Breast epithelium (tissue), 4 donors: ENCODE measurements at regions of chr2 and their contacts with region 1.

Region 1: DNA sequence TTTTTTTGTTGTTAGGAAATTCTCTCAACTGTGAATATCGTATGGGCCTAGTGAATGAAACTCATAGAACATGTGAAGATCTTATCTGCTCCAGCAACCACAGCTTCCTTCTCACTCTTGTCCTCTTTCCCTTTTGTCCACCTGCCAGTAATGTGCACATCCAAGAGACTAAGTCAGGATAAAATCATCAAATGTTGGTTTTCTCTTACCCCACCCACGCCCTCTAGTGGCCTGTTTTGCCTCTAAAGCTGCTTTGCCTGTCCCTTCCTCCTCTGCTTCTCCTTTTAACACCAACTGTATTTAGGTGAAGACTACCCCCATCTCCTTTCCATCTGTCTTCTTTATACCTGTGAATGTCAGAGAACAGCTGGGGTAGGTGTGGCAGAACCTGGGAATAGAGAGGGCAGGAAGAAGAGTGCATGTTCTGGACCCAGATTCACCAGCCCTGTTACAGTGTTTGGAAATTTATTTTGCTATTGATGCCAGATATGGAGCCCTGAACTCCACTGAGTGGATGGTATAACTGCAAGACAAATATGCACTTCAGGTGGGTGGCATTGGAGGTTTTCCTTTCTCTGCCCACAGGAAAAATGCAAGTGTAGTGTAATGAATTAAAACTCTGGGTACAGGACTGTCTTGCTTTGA is 8.4 kb upstream of the MGAT5 start:
- DNase-seq: peak; percentile 69 to 73
- H3K4me3 ChIP-seq: no peak overlapping the region
- H3K27ac ChIP-seq: no peak overlapping the region
- H3K4me1 ChIP-seq: no peaks in the 10 kb centered on the region
- H3K27me3 ChIP-seq: no peaks in the 10 kb centered on the region
- CTCF ChIP-seq: peak; percentile 24 to 75 (median 71)
- POLR2A ChIP-seq: no peak

Region 2: GRCh38 chr2:133855526-133855925 is 389.9 kb before region 1 on chr2:
- intact Hi-C with region 1: no loop called
- DNase-seq: no peak
- H3K4me3 ChIP-seq: no peak overlapping the region
- H3K27ac ChIP-seq: no peak overlapping the region
- H3K4me1 ChIP-seq: no peaks in the 10 kb centered on the region
- H3K27me3 ChIP-seq: no peaks in the 10 kb centered on the region
- CTCF ChIP-seq: no peak
- POLR2A ChIP-seq: no peak

Region 3: DNA sequence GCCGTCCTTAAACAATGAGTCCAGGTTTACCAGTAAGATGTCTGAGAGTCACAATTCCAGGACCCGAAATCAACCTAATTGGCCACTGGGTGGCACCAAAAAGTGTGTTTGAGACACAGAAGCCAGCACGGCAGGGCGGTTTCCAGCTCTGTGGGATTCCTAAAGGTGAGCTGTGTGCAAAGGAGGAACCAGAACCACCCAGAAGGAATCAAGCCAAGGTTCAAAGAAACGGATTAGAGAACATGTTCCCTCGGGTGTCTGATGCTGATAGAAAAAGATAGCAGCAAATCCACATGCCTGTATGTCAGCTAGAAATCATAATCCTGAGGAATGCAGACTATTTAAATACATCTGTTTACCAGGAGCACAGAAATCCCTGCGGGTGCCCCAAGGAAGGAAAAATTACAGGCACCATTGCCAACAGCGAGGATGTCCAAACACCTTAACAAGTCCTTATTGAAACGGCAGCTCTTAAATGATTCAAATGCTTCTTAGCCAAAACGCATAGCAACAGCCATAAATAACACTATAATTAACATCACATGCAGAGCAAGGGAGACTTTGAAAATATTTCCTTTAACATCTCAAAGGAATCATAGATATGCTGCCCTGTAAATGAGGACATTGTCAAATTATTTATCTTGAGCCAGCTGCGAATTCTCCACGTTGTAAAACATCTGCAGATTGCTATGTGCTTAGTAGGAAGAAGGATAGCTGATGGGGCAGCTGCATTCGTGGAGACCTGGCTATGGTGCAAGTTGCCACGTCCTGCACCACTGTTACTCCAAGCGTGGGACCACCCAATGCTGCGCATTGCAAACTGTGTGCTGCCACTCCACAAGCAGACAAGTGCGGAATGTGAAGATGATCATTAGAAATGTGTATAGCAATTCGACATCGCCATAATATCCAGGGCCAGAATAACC is 358.5 kb before region 1 on chr2:
- intact Hi-C with region 1: loop called (anchors 10 kb)
- DNase-seq: peak; percentile 75 to 81
- H3K4me3 ChIP-seq: peak overlapping the region in 1 of 3 donors; percentile 12
- H3K27ac ChIP-seq: peak overlapping the region in 1 of 2 donors; percentile 26
- H3K4me1 ChIP-seq: peaks cover 6 to 7% of the 10 kb centered on the region in 2 donors
- H3K27me3 ChIP-seq: no peaks in the 10 kb centered on the region
- CTCF ChIP-seq: peak; percentile 31 to 69 (median 68)
- POLR2A ChIP-seq: no peak

Region 4: DNA sequence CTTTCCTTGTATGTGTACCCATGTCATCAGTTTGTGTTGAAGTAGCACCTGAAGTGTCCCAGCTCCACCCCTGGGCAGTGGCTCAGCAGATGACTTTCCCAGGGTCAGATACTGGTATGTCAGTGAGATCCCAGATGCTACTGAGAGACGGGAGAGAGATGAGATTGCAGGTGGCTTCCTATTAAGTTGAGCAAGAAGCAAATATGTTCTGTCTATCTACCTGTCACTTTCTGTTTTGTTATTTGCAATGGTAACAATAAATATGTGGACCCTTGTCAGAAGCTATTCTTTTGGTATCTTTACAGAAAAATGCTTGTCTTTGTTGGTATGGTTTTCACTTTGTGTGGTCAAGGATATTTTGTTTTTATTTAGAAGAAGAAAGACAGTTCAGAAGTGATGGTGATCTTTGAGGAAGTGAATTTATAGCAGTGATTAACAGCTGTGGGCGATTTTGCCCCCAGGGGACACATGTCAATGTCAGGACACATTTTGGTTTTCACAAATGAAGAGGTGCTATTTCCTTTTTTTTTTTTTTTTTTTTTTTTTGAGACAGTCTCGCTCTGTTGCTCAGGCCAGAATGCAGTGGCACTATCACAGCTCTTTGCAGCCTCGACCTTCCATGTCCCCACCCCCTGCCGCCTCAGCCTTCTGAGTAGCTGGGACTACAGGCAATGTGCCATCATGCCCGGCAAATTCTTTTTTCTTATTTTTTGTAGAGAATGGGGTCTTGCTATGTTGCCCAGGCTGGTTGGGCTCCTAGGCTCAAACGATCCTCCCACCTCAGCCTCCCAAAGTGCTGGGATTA is 29.8 kb after region 1 on chr2:
- intact Hi-C with region 1: no loop called
- DNase-seq: no peak
- H3K4me3 ChIP-seq: no peak overlapping the region
- H3K27ac ChIP-seq: no peak overlapping the region
- H3K4me1 ChIP-seq: no peaks in the 10 kb centered on the region
- H3K27me3 ChIP-seq: no peaks in the 10 kb centered on the region
- CTCF ChIP-seq: no peak
- POLR2A ChIP-seq: no peak